ENCODE measurements at regions of chr20 and their contacts with region 1.

Region 1: DNA sequence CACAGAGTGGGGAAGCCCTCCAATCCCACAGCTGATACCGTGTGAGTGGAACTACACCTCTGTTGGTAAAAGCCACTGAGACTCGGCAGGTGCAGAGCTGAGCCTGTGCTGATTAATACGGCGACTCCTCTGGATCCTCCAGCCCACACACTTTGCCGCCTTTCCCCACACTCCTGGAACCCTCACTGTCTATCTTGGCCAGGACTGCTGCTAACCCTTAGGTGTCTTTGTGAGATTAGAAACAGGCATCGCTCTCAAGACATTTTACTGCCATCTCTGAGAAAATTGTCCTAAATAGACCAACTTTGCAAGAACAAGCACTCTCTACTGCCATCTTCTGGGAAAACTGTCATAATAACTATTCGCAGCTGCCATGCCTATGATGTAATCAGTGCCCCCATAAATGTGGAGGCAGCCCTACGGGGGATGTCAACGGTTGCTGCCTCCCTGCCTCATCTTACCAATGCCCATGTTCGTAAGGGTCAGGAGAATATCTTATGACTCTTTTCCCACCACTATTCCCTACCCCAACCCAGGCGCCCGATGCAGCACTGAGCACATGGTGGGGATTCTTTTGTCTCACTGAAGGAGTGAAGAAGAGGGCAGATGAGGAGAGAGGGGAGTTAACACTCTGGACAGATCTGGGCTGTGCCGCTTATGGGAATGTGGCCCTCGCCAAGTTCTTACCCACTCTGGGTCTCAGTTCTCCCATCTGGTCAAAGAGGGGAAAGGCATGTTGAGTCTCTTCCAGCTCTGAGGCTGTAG is 26.1 kb upstream of the KCNB1 start:
- DNase-seq: peak; percentile 67
- H3K4me3 ChIP-seq: no peak overlapping the region
- H3K27ac ChIP-seq: no peak overlapping the region
- H3K4me1 ChIP-seq: peaks cover 21% of the 10 kb centered on the region
- H3K27me3 ChIP-seq: no peaks in the 10 kb centered on the region

Region 2: DNA sequence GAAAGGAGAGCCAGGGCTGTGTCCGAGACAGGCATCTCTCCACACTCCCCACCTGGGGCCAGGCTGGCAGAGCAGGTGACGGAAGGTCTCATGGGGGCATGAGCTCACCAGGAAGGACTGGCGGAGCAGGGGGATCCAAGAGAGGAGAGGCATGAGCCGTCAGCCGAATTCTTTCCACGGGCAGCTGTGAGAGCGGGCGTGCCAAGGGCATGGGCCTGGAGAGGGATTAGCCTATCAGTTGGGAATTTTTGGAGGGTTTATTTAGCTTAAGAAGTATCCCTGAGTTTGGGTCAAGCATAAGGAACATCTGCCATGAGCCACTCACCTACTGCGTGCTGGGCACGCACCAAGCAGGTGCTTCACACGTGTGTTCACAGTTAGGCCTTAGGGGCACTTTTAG is 170.6 kb before region 1 on chr20:
- in situ Hi-C with region 1: loop called (anchors 10 kb)
- DNase-seq: no peak
- H3K4me3 ChIP-seq: no peak overlapping the region
- H3K27ac ChIP-seq: no peak overlapping the region
- H3K4me1 ChIP-seq: peaks cover 8% of the 10 kb centered on the region; the same call in 1 of the 2 replicates
- H3K27me3 ChIP-seq: peaks cover 5% of the 10 kb centered on the region

Region 3: DNA sequence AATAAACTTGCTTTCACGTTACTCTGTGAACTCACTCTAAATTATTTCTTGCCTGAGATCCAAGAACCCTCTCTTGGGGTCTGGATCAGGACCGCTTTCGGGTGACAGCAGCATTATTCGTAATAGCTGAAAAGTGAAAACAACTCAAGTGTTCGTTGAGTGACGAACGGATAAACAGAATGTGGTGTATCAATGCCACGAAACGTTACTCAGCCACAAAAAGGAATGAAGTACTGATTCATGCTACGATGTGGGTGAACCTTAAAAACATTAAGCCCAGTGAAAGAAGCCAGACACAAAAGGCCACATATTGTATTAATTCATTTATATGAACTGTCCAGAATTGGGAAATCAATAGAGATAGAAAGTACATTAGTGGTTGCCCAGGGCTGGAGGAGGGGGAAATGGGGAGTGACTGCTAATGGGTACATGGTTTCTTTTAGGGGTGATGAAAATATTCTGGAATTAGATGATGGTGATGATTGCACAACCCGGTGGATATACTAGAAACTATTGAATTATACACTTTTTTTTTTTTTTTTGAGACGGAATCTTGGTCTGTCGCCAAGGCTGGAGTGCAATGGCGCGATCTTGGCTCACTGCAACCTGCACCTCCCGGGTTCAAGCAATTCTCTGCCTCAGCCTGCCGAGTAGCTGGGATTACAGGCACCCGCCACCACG is 50.9 kb after region 1 on chr20:
- in situ Hi-C with region 1: no loop called
- DNase-seq: peak; percentile 96
- H3K4me3 ChIP-seq: peak overlapping the region; percentile 58
- H3K27ac ChIP-seq: peak overlapping the region; percentile 95
- H3K4me1 ChIP-seq: peaks cover 65% of the 10 kb centered on the region
- H3K27me3 ChIP-seq: no peaks in the 10 kb centered on the region

Measured in GM23248 (cell line).